Right ventricle myocardium inferior (tissue), 1 donor: ENCODE measurements at regions of chr5 and their contacts with region 1.

Region 1: DNA sequence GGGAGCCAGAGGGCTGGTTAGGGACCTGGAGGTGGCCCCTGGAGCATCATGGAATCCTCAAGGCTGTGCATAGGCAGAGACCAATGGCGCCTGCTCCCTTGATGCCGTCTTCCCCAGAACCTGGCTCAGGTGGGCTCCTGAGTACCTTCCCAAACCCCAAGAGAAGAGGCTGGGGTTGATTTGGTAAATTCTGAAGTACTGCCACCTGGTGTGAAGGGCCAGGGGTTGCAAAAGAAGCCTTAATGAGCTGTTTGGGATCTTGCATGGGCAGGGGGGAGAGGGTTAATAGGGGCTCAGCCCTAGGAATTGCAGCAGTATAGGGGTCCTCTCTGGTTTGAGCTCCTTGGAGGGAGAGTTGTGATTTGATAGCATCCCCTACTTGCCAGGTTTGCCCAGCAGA is 52.1 kb downstream of the CYSTM1 start:
- DNase-seq: no peak
- ATAC-seq: no peak

Region 2: DNA sequence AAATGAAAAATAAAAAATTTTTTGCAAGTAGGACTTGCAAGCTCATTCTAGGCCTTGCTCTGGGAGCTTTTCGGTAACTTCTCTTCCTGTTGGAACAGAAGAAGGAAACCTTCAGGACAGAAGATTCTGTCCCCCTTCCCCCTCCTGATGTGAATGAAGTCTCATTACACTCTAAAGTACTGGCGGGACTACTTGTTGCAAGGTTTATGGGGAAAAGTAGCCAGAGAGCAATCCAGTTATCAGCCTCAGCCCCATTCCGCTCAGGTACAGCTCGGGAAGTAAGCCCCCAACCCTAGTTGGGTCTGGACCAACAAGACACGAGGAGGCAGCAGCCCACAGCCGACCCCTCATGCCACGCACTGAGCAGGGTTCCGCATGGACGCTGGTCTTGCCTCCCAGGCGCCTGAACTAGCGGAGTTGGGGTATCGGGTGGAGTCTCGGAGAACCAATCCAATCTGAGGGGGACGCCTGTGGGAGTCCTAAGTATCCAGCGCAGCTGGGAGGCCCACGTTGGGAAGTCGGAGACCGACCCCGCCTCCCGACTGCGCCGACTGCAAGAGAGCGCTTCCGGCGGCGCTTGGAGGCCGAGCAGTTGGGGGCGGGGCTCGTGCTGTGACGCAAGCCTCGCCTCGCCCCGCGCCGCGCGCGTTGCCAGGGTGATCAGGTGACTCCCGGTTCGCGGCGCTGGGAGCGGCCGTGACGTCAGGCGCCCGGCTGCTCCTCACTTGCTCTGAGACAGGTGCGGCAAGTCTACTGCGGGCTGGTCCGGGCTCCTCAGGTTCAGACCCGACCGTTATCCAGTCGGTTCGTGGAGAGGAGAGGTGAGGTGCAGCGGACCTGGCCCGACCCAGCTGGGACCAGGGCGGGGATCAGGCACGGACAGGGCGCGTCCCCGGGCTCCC is 52.3 kb before region 1 on chr5 and contains the start of gene CYSTM1:
- intact Hi-C with region 1: loop called (anchors 5 kb)
- DNase-seq: peak; percentile 99
- ATAC-seq: peak; percentile 96
- total RNA-seq, gene CYSTM1: 67.0 TPM

Region 3: DNA sequence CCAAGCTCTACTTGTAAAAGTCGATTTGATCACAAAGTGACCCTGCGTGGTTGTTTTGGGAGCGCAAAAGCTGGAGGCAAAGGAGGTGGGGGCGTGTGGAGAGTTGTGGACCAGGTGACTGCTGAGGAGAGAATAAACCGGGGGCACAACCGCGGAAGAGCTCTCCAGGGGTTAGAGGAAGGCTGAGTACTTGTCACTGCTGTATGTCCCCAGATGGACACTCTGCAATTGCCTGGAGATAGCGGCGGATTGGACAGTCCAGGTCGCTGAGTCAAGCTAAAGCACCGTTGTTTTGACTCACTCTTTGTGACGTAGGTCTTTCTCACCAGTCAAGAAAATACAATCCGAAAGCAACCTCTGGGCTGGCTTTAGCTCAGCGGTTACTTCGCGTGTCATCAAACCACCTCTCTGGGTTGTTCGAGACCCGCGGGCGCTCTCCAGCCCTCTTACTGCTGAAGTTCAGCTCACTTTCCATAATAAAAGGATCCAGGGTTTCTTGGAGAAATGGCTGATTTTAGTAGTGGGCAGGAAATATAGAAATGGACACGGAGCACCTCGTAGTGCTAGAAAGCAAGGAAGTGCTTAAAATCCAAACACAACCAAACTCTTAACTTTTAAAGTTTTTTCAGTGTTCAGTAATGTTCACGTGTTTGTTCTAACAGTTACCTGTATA is 498.9 kb after region 1 on chr5:
- intact Hi-C with region 1: no loop called
- DNase-seq: no peak
- ATAC-seq: peak; percentile 8